Caco-2 (cell line): ENCODE measurements at regions of chr2 and their contacts with region 1.

Region 1: DNA sequence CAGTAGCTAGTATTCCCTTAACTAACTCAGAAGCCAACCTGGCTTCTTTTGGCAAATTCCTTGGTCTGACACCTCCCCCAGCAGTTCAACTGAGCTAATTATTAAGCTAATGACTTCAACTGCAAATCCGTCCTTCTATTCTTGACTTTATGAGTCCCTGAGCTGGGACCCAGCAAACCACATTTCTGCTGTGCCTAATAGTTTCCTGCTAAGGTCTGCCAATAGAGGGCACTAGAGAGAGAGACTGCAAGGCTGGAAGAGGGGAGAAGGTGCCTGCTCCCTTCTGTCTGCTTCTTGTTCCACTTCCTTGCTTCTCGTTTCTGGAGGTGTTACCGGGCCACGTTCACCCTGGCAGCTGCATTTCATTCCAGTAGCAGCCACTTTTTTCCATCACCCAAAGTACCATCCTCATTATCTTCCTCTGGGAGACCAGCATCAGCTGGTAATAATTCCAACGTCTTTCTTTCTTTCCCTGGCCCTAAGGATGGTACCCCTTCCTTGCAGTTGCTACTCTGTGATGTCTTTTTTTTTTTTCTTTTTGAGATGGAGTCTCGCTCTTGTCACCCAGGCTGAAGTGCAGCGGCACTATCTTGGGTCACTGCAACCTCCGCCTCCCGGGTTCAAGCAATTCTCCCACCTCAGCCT is 352.0 kb downstream of the TNS1 start:
- DNase-seq: peak; percentile 77 to 85
- H3K4me3 ChIP-seq: no peak overlapping the region
- H3K4me3 Mint-ChIP-seq: no peak overlapping the region
- H3K27ac Mint-ChIP-seq: no peak overlapping the region
- H3K4me1 ChIP-seq: peaks cover 7% of the 10 kb centered on the region
- H3K4me1 Mint-ChIP-seq: peaks cover 10% of the 10 kb centered on the region
- H3K27me3 ChIP-seq: no peaks in the 10 kb centered on the region
- H3K27me3 Mint-ChIP-seq: no peaks in the 10 kb centered on the region
- CTCF ChIP-seq: peak; percentile 67 to 85

Region 2: DNA sequence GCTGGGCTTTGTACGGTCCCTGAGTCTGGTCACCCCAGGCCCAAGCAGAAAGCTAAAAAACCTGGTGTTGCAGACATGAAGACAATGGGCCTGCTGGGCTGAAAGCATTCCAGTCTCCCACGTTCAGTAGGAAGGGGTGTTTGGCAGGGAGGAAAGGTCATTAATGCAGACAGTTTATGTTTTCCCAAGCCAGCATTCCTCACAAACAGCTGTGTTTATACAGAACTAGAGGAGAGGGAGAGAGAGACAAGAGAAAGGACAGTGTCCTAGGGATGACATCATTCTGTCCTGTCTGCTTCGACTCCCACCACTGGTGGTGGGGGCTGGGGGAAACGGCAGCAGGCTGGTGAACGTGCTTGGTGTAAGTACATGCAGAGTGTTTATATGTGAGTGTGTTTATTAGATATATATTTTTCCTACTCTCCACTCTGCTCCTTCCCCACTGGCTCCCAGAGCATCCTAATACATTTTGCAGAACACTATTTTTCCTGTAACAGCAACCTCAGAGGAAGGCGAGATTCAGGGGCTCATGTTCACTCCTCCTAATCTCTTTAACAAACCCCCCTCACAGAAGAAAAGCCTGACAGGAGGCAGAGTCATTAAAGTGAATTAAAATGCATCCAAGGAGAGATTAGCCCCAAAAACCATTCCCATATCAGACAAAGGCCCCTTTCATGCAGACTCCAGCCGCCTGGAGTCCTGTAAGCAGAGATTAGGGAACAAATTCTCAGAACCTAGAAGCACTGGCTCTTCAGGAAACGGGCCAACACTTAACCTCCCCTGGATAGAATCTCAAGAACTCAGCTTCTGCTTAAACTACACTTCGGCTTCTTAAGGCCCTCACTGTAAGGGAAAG is 28.4 kb before region 1 on chr2:
- CTCF ChIA-PET with region 1: interaction called, 10 read pairs
- POLR2A ChIA-PET with region 1: no interaction called
- intact Hi-C with region 1: loop called (anchors 1 kb)
- DNase-seq: peak; percentile 66 to 67
- H3K4me3 ChIP-seq: no peak overlapping the region
- H3K4me3 Mint-ChIP-seq: no peak overlapping the region
- H3K27ac Mint-ChIP-seq: peak overlapping the region; percentile 87
- H3K4me1 ChIP-seq: peaks cover 18% of the 10 kb centered on the region
- H3K4me1 Mint-ChIP-seq: peaks cover 16% of the 10 kb centered on the region
- H3K27me3 ChIP-seq: no peaks in the 10 kb centered on the region
- H3K27me3 Mint-ChIP-seq: no peaks in the 10 kb centered on the region
- CTCF ChIP-seq: no peak

Region 3: DNA sequence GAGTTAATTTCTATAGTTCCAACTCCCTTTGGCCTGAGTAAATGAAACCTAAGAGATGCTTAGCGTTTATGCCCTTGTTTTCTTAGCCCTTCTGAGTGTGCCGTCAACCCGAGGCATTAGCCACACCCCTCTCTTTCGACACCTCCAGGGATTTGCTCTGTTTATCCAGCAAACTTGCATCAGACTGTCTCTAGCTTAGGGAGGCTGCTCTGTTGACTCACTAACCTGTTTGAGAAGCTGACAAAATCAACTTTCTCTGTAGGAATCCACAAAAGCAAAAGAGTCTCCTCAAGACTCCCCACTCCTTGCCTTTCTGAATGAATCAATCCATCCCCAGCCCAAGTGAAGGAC is 34.4 kb after region 1 on chr2:
- CTCF ChIA-PET with region 1: interaction called, 8 read pairs
- POLR2A ChIA-PET with region 1: interaction called, 3 read pairs
- intact Hi-C with region 1: loop called (anchors 2 kb)
- DNase-seq: peak; percentile 91 to 93
- H3K4me3 ChIP-seq: no peak overlapping the region
- H3K4me3 Mint-ChIP-seq: peak overlapping the region; percentile 58
- H3K27ac Mint-ChIP-seq: peak overlapping the region; percentile 89
- H3K4me1 ChIP-seq: peaks cover 24% of the 10 kb centered on the region
- H3K4me1 Mint-ChIP-seq: peaks cover 22% of the 10 kb centered on the region
- H3K27me3 ChIP-seq: no peaks in the 10 kb centered on the region
- H3K27me3 Mint-ChIP-seq: no peaks in the 10 kb centered on the region
- CTCF ChIP-seq: no peak